PC-9 (cell line): ENCODE measurements at regions of chr15 and their contacts with region 1.

Region 1: DNA sequence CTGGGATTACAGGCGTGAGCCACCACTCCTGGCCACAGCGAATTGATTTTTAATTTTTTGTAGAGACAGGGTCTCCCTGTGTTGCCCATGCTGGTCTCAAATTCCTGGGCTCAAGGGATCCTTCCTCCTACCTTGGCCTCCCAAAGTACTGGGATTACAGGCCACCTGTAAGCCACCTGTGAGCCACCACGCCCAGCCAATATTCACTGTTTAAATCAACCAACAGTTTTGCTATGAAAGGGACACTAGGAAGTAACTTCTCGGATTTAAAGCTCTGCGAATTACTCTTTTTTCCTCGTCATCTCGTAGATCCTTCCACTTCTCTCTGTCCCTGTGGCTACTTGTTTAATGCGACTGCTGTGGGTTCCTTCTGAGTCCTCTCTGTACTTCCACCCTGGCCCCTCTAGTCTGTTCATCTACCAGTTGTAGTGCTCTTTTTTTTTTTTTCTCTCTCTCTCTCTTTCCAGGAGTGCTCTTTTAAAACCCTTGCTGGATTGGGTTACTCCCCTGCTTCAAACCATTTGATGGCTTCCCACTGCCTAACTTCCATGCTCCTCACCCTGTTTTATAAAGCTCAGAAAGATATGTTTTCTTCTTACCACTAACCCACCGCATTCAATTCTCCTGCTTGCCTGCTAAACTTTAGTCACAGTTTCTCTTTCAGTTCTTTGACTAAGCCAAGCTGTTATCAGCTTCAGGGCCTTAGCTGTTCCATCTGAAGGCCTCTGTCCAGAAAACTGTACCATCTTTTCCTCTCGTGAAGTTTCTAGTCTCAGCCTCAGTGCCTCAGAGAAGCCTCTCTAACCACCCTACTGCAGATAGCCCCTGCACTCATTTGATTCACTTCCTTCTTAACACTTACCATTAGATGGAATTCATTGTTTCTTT is 12.4 kb downstream of the RTF1 start:
- DNase-seq: no peak
- H3K4me3 ChIP-seq: no peak overlapping the region
- H3K27ac ChIP-seq: no peak overlapping the region
- H3K4me1 ChIP-seq: no peaks in the 10 kb centered on the region
- H3K27me3 ChIP-seq: no peaks in the 10 kb centered on the region
- CTCF ChIP-seq: no peak

Region 2: DNA sequence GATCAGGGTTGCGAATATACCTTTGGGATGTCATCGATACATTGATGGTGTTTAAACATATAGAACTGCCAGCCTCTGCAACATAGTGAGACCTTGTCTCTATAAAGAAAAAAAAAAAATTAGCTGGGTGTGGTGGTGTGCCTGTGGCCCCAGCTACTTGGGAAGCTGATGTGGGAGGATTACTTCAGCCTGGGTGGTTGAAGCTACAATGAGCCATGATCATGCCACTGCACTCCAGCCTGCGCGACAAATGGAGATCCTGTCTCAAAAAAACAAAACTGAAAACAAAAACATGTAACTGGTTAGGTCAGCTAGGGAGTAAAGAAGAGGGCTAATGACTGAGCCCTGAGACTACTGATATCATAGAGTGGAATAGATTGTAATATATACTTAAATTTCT is 200.2 kb after region 1 on chr15:
- CTCF ChIA-PET with region 1: no interaction called
- POLR2A ChIA-PET with region 1: interaction called, 10 read pairs
- intact Hi-C with region 1: no loop called
- DNase-seq: no peak
- H3K4me3 ChIP-seq: no peak overlapping the region
- H3K27ac ChIP-seq: no peak overlapping the region
- H3K4me1 ChIP-seq: no peaks in the 10 kb centered on the region
- H3K27me3 ChIP-seq: no peaks in the 10 kb centered on the region
- CTCF ChIP-seq: no peak